BJ (cell line): ENCODE measurements at regions of chr5 and their contacts with region 1.

Region 1: GRCh38 chr5:140372971-140373487 is 13.0 kb downstream of the SLC4A9 start:
- DNase-seq: no peak
- H3K4me3 ChIP-seq: no peak overlapping the region
- H3K27me3 ChIP-seq: 0 out of 2 replicates have a peak, but pooled peaks cover 2% of the 10 kb centered on the region
- CTCF ChIP-seq: peak; percentile 84

Region 2: GRCh38 chr5:140196115-140196814 is 176.8 kb before region 1 on chr5:
- CTCF ChIA-PET with region 1: no interaction called
- POLR2A ChIA-PET with region 1: no interaction called
- DNase-seq: no peak
- H3K4me3 ChIP-seq: no peak overlapping the region
- H3K27me3 ChIP-seq: no peaks in the 10 kb centered on the region
- CTCF ChIP-seq: no peak

Region 3: DNA sequence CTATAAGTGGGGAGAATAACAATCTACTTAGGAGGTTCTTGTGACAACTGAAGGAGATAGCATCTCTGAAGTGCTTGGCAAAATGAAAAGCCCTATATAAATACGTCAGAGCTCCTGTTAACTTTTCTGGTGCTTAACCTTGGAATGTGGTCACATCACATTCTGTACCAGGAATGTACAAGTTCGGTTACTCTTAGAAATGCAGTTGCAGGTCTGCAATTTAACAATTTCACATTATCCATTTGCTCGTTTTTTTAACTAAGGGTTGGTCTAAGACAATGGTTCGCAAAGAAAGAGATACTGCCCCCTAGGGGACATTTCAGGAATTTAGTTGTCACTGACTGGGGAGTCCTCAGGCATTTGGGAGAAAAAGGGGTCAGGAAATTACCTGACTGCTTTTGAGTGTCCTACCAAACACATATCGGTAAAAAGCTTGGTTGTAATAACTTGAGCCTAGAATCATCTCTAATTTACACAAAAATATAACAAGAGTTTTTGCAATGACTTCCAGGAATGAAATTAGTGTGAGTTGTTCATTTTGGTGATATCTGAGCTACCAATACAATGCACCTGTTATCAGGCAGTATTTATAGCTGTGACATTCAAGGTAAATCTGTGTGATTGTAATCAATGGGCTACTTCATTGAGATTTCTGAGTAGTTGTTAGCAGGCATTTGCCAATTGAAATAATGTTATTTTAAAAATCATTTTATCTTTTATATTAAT is 21.3 kb before region 1 on chr5:
- CTCF ChIA-PET with region 1: interaction called, 10 read pairs
- POLR2A ChIA-PET with region 1: no interaction called
- DNase-seq: no peak
- H3K4me3 ChIP-seq: no peak overlapping the region
- H3K27me3 ChIP-seq: no peaks in the 10 kb centered on the region
- CTCF ChIP-seq: peak; percentile 80

Region 4: DNA sequence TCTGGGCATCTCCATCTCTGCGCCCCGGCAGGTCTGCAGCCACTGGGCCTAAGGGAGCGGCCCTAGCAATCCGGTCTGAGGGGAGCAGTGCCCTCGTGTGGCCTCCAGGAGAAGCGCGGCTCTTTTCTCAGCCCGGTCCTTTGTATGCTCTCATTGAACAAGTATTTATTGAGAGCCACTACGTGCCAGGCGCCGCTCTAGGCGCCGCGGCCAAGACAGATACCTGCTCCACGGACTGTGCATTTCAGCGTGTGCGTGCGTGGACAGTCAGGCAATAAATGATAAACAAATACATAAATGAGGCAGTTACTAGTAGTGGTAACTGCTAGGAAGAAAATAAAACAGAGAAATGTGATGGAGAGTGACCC is 15.3 kb before region 1 on chr5:
- CTCF ChIA-PET with region 1: interaction called, 34 read pairs
- POLR2A ChIA-PET with region 1: no interaction called
- DNase-seq: peak; percentile 41
- H3K4me3 ChIP-seq: no peak overlapping the region
- H3K27me3 ChIP-seq: no peaks in the 10 kb centered on the region
- CTCF ChIP-seq: peak; percentile 95

Region 5: GRCh38 chr5:140391312-140391711 is 18.3 kb after region 1 on chr5:
- CTCF ChIA-PET with region 1: interaction called, 26 read pairs
- POLR2A ChIA-PET with region 1: no interaction called
- DNase-seq: no peak
- H3K4me3 ChIP-seq: no peak overlapping the region
- H3K27me3 ChIP-seq: no peaks in the 10 kb centered on the region
- CTCF ChIP-seq: no peak

Region 6: DNA sequence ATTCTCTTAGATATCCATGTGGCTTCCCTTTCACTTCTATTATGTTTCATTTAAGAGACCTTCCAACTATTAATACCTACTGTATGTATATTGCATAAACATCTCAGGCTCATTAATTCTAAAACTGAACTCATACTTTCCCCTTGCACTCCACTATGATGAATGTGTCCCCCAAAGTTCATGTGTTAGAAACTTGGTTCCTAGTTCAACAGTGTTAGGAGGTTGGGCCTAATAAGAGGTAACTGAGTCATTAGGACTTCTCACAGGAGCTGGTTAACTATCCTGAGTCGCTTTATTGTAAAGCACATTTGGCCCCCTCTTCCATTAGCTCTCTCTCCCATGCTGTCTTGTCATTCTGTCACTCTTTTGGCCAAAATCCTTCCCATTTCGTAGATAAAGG is 50.6 kb after region 1 on chr5:
- CTCF ChIA-PET with region 1: no interaction called
- POLR2A ChIA-PET with region 1: no interaction called
- DNase-seq: no peak
- H3K4me3 ChIP-seq: no peak overlapping the region
- H3K27me3 ChIP-seq: no peaks in the 10 kb centered on the region
- CTCF ChIP-seq: no peak

Region 7: DNA sequence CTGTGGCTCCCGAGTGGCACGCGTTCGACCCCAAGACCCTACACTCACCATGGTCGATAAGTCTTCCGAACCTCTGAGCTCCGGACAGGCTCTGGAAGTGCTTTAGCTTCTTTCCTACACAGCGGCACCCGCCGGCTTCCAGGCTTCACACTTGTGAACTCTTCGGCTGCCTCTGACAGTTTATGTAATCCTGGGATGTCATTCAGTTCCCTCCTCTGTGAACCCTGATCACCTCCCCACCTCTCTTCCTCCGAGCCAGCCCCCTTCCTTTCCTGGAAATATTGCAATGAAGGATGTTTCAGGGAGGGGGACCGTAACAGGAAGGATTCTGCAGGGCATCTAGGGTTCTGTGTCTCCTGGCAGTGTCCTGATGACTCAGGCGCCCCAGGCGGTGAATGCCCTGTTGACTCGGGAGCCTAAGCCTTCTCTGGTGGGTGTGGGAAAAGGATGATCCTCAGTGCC is 260.0 kb after region 1 on chr5 and contains the start of gene CD14:
- CTCF ChIA-PET with region 1: interaction called, 15 read pairs
- POLR2A ChIA-PET with region 1: no interaction called
- DNase-seq: no peak
- H3K4me3 ChIP-seq: peak within 1 kb of the TSS; percentile 34
- H3K27me3 ChIP-seq: no peaks in the 10 kb centered on the region
- CTCF ChIP-seq: peak; percentile 18; the same call in 1 of the 2 replicates
- polyA plus RNA-seq, gene CD14: 0.69 and 1.9 TPM in 2 replicates